Caco-2 (cell line): ENCODE measurements at regions of chr7 and their contacts with region 1.

Region 1: GRCh38 chr7:74407958-74408357 is 45.7 kb upstream of the GTF2IRD1 start:
- DNase-seq: no peak
- H3K4me3 ChIP-seq: no peak overlapping the region
- H3K4me3 Mint-ChIP-seq: no peak overlapping the region
- H3K27ac Mint-ChIP-seq: no peak overlapping the region
- H3K4me1 ChIP-seq: no peaks in the 10 kb centered on the region
- H3K4me1 Mint-ChIP-seq: no peaks in the 10 kb centered on the region
- H3K27me3 ChIP-seq: no peaks in the 10 kb centered on the region
- H3K27me3 Mint-ChIP-seq: no peaks in the 10 kb centered on the region
- CTCF ChIP-seq: no peak

Region 2: DNA sequence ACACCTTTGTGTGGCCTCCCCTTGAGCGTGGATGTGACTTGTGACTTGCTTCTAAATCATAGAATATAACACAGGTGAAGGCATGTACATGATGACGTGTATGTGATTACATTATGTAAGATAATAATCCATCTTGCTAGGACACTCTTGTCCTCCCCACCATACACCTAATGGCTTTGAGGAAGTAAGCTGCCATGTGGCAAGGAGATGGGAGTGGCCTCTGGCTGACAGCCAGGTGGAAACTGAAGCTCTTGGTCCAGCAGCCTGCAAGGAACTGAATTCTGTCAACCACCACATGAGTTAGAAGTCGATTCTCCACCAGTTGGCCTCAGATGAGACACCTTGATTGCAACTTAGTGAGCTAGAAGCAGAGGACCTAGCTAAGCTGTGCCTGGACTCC is 447.4 kb before region 1 on chr7:
- CTCF ChIA-PET with region 1: interaction called, 10 read pairs
- POLR2A ChIA-PET with region 1: no interaction called
- intact Hi-C with region 1: no loop called
- DNase-seq: no peak
- H3K4me3 ChIP-seq: no peak overlapping the region
- H3K4me3 Mint-ChIP-seq: no peak overlapping the region
- H3K27ac Mint-ChIP-seq: no peak overlapping the region
- H3K4me1 ChIP-seq: no peaks in the 10 kb centered on the region
- H3K4me1 Mint-ChIP-seq: no peaks in the 10 kb centered on the region
- H3K27me3 ChIP-seq: no peaks in the 10 kb centered on the region
- H3K27me3 Mint-ChIP-seq: peaks cover 3% of the 10 kb centered on the region
- CTCF ChIP-seq: no peak